ENCODE measurements at regions of chr15 and their contacts with region 1.

Region 1: DNA sequence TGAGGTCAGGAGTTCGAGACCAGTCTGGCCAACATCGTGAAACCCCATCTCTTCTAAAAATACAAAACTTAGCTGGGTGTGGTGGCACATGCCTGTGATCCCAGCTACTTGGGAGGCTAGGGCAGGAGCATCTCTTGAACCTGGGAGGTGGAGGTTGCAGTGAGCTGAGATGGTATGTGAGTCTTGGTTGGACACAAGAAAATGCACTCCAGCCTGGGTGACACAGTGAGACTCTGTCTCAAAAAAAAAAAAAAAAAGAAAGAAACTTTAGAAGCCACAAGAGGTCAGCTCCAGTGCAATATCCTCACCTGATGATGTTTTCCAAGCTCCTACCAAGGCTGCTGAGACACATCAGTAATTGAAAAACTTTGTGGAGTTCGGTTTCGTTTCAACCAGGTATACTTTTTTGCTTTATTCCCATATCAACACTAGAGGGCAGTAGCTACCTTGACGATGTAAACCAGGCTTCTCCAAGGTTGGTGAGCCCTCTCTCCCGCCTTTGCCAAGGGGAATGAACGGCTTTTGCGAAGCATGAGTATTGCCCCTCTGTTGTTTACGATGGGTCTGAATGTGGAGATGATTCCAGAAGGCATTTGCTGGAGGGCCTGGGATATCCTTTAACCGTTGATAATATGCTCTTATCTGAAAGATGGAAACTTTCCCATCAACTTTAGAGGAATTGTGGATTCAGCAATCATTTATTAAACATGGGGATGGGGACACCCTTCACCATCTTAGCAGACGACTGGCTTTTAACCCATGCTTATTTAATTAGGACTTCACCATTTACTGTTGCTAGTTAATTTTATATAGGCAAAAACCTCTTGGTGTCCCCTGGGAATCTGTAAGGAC is 202.8 kb downstream of the SV2B start:
- DNase-seq: no peak
- ATAC-seq: peak; percentile 80

Region 2: GRCh38 chr15:92077353-92078085 is 774.7 kb after region 1 on chr15:
- intact Hi-C with region 1: loop called (anchors 5 kb)
- DNase-seq: peak; percentile 83
- ATAC-seq: peak; percentile 77

Measured in sciatic nerve (tissue), 2 donors.